ENCODE measurements at regions of chr11 and their contacts with region 1.

Region 1: GRCh38 chr11:19306179-19306944 is 65.6 kb upstream of the E2F8 start:
- DNase-seq: no peak
- ATAC-seq: no peak

Region 2: DNA sequence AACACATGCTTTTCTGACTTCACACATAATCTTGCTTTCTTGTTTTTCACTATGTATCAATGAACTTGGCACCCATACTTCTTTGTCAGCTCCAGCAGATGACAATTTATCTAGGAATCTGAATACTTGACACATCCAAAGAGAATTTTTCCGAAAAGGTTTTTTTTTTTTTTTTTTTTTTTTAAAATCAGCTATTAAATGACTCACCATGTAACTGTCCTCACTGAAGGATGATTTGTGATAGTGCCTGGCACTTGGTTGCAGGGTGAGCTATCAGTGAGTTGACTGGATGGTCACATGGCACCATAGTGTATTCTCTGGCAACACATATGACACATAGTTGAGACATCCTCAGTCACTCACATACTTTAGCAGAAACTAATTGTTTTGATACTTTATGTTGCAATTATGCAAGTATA is 67.8 kb after region 1 on chr11:
- intact Hi-C with region 1: no loop called
- DNase-seq: no peak
- ATAC-seq: no peak

Region 3: GRCh38 chr11:19389787-19390303 is 83.5 kb after region 1 on chr11:
- intact Hi-C with region 1: no loop called
- DNase-seq: no peak
- ATAC-seq: peak; percentile 51

Region 4: GRCh38 chr11:19756675-19757475 is 450.5 kb after region 1 on chr11:
- intact Hi-C with region 1: loop called (anchors 10 kb)
- DNase-seq: peak; percentile 51
- ATAC-seq: peak; percentile 90